Ovary (tissue), 10 donors: ENCODE measurements at regions of chr3 and their contacts with region 1.

Region 1: GRCh38 chr3:79183496-79183895 is 584.3 kb downstream of the ROBO1 start:
- DNase-seq: no peak
- H3K4me3 ChIP-seq: no peak overlapping the region
- H3K27ac ChIP-seq: no peak overlapping the region
- H3K4me1 ChIP-seq: no peaks in the 10 kb centered on the region
- H3K27me3 ChIP-seq: no peaks in the 10 kb centered on the region
- CTCF ChIP-seq: no peak
- EP300 ChIP-seq: no peak
- POLR2A ChIP-seq: no peak

Region 2: DNA sequence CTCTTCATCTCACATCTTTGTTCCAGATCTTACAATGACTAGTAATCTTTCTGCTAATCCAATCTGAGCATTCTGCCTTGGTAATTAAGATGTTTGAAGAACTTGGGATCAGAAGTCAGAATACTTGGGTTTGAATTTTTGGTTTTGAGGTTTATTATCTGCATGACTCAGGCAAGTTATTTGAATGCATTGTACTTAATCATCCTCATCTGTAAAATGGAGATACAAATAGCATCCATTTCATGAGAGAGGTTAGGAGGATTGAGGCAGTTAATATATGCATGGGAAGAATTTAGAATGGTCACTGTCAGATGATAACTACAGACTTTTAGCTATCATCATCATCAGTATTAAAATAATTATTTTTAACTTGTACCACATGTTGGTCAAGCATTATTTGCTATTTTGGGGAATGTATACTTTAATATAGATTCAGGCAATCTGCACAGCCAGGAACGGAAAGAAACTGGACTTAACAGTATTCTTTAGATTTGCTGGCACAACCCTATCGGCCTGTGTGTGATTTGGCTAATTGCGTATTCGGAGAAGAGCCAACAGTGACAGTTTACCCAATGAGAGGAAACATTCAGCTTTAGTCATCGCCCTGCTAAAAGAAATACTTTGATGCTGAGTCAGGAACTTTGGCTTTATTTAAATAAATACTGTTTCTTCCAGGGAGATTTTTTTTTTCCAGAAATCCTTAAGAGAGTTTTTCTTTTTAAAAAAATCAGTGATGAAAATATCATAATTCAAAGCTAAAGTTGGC is 15.7 kb before region 1 on chr3:
- intact Hi-C with region 1: loop called in 1 of 4 experiments (anchors 2 kb)
- DNase-seq: no peak
- H3K4me3 ChIP-seq: no peak overlapping the region
- H3K27ac ChIP-seq: no peak overlapping the region
- H3K4me1 ChIP-seq: no peaks in the 10 kb centered on the region
- H3K27me3 ChIP-seq: no peaks in the 10 kb centered on the region
- CTCF ChIP-seq: no peak
- EP300 ChIP-seq: no peak
- POLR2A ChIP-seq: no peak

Region 3: DNA sequence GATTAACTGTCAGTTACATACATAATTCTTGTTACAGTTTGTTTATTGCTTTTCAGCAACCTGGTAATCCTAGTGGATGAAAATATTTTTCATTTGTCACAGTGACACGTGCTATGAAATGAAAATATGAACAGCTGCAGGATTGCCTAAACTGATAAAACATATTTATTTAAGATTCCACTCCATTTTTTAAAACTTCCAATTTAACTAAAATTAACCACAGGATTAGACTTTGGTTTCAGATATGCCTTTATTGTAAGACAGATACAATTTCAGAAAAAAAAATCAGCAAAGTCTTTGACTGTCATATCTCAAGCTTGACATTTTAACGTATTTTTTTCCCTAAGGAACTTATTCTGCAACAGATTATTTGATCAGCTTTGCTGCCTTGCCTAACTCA is 33.6 kb after region 1 on chr3:
- intact Hi-C with region 1: no loop called
- DNase-seq: no peak
- H3K4me3 ChIP-seq: no peak overlapping the region
- H3K27ac ChIP-seq: no peak overlapping the region
- H3K4me1 ChIP-seq: no peaks in the 10 kb centered on the region
- H3K27me3 ChIP-seq: no peaks in the 10 kb centered on the region
- CTCF ChIP-seq: no peak
- EP300 ChIP-seq: no peak
- POLR2A ChIP-seq: no peak

Region 4: GRCh38 chr3:79354179-79354688 is 170.7 kb after region 1 on chr3:
- intact Hi-C with region 1: no loop called
- DNase-seq: no peak
- H3K4me3 ChIP-seq: no peak overlapping the region
- H3K27ac ChIP-seq: no peak overlapping the region
- H3K4me1 ChIP-seq: no peaks in the 10 kb centered on the region
- H3K27me3 ChIP-seq: no peaks in the 10 kb centered on the region
- CTCF ChIP-seq: no peak
- EP300 ChIP-seq: no peak
- POLR2A ChIP-seq: no peak